Posterior vena cava (tissue), 2 donors: ENCODE measurements at regions of chr16 and their contacts with region 1.

Region 1: DNA sequence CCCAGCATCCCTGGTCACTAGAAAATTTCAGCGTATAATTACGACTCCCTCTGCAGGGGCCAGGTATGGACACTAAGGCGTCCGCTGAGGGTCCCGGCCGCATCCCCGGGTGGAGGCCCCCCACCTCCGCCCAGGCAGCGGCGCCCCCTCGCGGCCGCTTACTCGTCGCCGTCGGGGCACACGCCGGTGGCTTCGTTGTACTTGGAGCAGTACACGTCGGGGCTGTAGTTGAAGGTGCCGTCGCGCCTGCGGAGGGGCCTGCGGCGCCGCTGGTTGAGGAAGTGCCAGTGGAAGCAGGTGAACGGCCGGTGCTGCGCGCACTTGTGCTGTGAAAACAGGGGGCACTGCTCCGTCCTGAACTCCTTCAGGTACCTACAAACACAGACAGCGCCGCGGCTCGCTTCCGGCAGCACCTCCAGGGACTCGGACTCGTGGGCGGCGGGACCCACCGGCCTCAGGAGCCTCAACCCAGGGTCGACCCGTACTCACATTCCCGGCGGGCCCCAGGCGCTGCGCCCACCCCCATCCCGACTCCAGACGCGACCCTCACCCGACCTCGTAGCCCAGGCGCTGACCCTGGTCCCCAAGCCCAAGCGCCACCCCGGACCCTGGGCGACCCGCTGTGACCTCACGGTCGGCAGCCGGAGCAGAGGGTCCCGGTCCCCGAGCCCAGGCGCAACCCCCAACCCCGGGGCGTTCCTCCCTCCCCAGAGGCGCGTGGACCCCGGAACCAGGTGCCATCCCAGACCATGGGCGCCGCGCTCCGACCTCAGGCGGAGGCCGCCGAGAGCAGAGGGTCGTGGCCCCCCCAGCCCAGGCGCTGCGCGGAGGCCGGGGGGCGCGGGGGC is 596 bp downstream of the UNKL start:
- DNase-seq: no peak

Region 2: GRCh38 chr16:1363501-1364041 is 50.3 kb before region 1 on chr16:
- intact Hi-C with region 1: loop called in 1 of 2 experiments (anchors 10 kb)
- DNase-seq: no peak

Region 3: GRCh38 chr16:1533443-1533951 is 119.6 kb after region 1 on chr16 and contains the start of gene TMEM204:
- intact Hi-C with region 1: loop called in 1 of 2 experiments (anchors 10 kb)
- DNase-seq: peak; percentile 93
- total RNA-seq, gene TMEM204: 23.7 to 36.5 TPM

Region 4: DNA sequence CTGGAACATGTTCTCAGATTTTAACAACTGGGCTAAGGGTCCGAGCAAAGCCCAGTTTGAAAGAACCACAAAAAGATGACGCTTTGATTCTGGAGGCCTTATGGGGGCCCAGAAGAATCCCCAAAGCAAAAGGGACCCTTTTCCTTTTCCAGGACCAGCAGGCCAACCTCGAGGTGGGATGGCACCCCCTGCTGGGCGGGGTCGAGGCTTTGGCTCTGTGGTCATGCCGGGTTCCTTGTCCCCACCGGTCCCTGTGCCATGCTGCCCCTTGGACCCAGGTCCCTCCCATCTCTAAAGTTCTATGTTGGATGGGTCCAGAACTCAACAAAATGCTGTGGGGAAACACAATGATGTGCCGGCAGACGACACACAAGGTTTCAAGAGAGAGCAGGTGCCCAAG is 150.4 kb after region 1 on chr16:
- intact Hi-C with region 1: no loop called
- DNase-seq: no peak